ENCODE measurements at regions of chr19 and their contacts with region 1.

Region 1: GRCh38 chr19:50779504-50780457 is 9.5 kb downstream of the GPR32 start:
- ATAC-seq: peak in 2 of 8 experiments; percentile 16 to 19
- H3K4me3 ChIP-seq: no peak overlapping the region
- H3K27ac ChIP-seq: no peak overlapping the region
- H3K4me1 ChIP-seq: peaks cover 7% of the 10 kb centered on the region in 2 donors

Region 2: GRCh38 chr19:50705422-50706019 is 74.3 kb before region 1 on chr19:
- in situ Hi-C with region 1: loop called in 2 of 9 experiments (anchors 10 kb)
- ATAC-seq: peak; percentile 59 to 97 (median 86)
- H3K4me3 ChIP-seq: no peak overlapping the region
- H3K27ac ChIP-seq: no peak overlapping the region
- H3K4me1 ChIP-seq: no peaks in the 10 kb centered on the region

Region 3: GRCh38 chr19:50835785-50836542 is 56.2 kb after region 1 on chr19:
- in situ Hi-C with region 1: no loop called
- ATAC-seq: peak; percentile 95 to 99 (median 97)
- H3K4me3 ChIP-seq: peak overlapping the region; percentile 40 to 50 (median 43)
- H3K27ac ChIP-seq: peak overlapping the region in 1 of 2 donors; percentile 37
- H3K4me1 ChIP-seq: peaks cover 0 to 14% of the 10 kb centered on the region in 2 donors